BJ (cell line): ENCODE measurements at regions of chr7 and their contacts with region 1.

Region 1: GRCh38 chr7:142478479-142479072 is 220.7 kb upstream of the PRSS58 start:
- DNase-seq: no peak
- H3K4me3 ChIP-seq: no peak overlapping the region
- H3K27me3 ChIP-seq: no peaks in the 10 kb centered on the region
- CTCF ChIP-seq: peak; percentile 74

Region 2: DNA sequence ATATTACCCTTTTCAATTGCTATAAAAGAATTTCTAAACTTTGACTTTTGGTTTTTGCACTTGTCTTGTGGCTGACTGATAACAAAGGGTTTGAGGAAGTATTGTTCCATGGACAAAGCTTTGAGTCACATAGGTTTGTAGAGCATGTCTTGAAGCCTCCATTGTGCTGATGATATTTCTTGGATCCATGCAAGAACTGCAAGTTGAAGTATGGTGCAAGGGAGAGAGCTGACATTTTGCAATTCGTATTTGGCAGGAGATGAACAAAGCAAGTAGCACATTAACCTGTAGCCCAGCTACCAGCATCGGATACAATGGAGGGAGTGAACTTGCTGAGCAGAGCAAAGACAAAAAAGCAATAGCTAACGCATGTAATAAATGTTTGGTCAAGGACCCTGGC is 343.7 kb before region 1 on chr7:
- CTCF ChIA-PET with region 1: no interaction called
- POLR2A ChIA-PET with region 1: no interaction called
- DNase-seq: no peak
- H3K4me3 ChIP-seq: no peak overlapping the region
- H3K27me3 ChIP-seq: no peaks in the 10 kb centered on the region
- CTCF ChIP-seq: no peak

Region 3: DNA sequence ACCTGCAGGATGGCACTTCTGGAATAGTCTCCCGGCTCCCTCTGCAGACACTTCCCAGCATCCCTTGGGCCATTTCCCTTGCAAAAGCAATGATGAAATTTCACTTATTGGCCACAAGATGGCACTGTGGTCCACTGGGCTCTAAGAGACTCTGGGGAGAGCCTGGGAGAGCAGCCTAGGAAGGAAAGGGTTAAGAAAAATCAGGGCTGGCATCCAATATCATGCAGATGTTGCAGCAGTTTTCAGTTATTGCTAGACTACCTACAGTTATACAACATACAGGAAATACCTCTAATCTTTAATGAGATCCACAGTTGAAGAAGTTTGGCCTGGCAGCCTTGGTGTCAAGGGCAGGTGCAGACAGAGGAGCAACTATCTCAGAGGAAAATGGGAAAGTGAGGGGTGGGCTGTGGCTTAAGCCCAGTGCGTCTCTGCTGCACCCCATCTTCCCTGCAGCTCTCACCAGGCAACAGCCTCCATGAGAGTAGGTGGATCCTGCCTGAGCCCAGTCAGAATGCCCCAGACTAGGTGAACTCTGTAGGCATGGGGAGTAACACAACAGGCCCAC is 120.5 kb before region 1 on chr7:
- CTCF ChIA-PET with region 1: interaction called, 15 read pairs
- POLR2A ChIA-PET with region 1: no interaction called
- DNase-seq: no peak
- H3K4me3 ChIP-seq: no peak overlapping the region
- H3K27me3 ChIP-seq: no peaks in the 10 kb centered on the region
- CTCF ChIP-seq: peak; percentile 85

Region 4: DNA sequence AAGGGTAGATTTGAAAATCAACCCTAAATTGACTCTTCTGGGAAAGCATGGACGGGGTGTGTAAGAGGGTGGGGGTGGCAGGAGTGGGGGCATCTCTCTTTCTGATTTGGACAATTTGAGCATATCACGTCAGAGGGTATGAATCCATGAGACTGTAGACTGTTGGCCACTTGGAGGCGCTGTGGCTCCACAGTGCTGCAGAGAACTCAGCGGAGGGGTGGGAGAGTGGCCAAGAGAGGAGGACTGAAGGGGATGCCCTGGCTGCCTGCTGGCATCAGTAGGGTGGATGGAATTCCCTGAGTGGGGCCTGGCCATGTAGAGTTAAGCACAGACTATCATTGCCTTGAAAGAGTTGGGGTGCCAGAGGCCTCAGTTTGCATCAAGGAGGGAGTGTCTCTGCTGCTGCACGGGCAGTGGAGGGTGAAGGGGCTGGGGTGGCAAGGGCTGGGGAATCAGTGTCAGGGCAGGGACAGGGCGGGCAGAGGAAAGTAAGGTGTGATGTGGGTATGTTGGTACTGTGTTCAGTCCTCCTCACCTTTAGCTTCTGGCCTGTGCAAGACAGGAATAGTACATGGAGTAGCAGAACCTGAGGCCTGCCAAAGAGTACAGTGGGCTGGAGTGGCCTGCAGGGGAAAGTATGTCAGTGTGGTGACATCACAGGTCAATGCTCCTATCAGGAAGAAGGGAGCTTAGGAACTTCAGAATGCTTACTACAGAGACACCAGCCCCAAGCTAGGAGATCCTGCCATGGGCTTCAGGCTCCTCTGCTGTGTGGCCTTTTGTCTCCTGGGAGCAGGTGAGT is 87.2 kb before region 1 on chr7:
- CTCF ChIA-PET with region 1: interaction called, 67 read pairs
- POLR2A ChIA-PET with region 1: no interaction called
- DNase-seq: no peak
- H3K4me3 ChIP-seq: no peak overlapping the region
- H3K27me3 ChIP-seq: peaks cover 4% of the 10 kb centered on the region
- CTCF ChIP-seq: peak; percentile 38; the same call in 1 of the 2 replicates

Region 5: DNA sequence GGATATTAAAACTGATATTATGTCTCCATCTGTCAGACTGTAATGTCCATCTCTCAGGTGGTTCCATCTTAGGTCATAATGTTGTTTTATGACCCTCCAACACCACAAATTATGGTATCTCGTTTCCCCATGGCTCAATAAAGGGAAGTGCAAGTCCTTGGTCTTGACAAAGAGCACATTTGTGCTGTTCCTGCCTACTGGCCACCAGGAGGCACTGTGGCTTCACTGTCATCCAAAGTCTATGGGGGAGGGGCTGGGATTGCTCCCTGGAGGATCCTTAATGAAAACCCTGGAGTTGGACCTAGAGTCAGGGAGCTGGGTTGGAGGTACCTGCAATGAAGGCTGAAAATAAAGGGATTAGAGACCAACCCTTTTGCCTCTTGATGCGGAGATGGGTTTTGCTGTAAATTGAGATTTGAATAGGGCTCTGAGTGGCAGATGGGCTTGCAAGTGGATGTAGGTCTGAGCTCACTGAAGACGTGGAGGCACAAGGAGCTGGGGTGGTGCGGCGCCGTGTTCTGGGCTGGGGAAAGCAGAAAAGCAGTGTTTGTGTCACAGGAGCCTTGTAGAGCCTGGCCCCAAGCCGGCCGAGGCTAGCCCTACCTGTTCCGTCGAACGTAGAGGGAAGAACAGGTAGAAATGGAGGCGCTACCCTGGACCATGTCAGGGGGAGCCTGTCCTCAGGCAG is 40.2 kb before region 1 on chr7:
- CTCF ChIA-PET with region 1: interaction called, 32 read pairs
- POLR2A ChIA-PET with region 1: no interaction called
- DNase-seq: no peak
- H3K4me3 ChIP-seq: no peak overlapping the region
- H3K27me3 ChIP-seq: no peaks in the 10 kb centered on the region
- CTCF ChIP-seq: peak; percentile 68

Region 6: GRCh38 chr7:142496545-142497041 is 18.0 kb after region 1 on chr7:
- CTCF ChIA-PET with region 1: interaction called, 641 read pairs
- POLR2A ChIA-PET with region 1: no interaction called
- DNase-seq: no peak
- H3K4me3 ChIP-seq: no peak overlapping the region
- H3K27me3 ChIP-seq: peaks cover 16% of the 10 kb centered on the region
- CTCF ChIP-seq: peak; percentile 77

Region 7: DNA sequence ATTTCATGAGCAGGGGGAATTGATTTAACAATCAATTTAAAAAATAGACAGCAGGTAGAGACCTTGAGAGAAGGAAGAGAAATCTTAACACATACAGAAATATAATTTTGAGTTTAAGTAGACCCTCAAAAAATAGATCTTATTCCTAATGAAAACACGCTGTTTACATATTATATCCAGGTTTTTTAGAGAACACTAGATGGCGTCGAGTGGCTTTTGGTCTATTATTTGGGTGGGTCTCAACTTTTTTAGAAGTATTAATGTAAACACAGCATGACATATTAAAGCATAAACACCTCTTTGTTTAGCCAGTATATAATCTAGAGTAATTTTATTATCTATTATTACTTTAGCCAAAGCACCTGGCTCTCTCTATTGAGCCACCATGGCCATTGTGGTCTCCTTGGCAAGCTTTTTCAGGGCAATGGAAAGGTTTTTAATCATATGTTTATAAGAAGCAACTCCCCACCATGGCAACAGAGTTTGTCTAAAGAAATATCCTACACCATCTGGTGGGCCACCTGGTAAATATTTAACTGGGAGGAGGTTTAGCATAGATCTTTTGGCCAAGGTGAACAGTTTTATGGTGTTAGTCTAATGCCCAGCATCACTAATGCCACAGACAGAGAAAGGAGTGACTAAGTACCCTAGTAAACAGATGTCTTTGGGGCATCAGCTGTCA is 211.0 kb after region 1 on chr7:
- CTCF ChIA-PET with region 1: no interaction called
- POLR2A ChIA-PET with region 1: no interaction called
- DNase-seq: no peak
- H3K4me3 ChIP-seq: no peak overlapping the region
- H3K27me3 ChIP-seq: peaks cover 2% of the 10 kb centered on the region; the same call in 1 of the 2 replicates
- CTCF ChIP-seq: peak; percentile 5; the same call in 1 of the 2 replicates

Region 8: GRCh38 chr7:143131781-143132180 is 653.2 kb after region 1 on chr7 and contains the start of gene PIP:
- CTCF ChIA-PET with region 1: no interaction called
- POLR2A ChIA-PET with region 1: no interaction called
- DNase-seq: no peak
- H3K4me3 ChIP-seq: no peak within 1 kb of the TSS
- H3K27me3 ChIP-seq: no peaks in the 10 kb centered on the region
- CTCF ChIP-seq: no peak
- polyA plus RNA-seq, gene PIP: not detected in 2 replicates